Activated CD4-positive, alpha-beta T cell treated with anti-CD3 and anti-CD28 coated beads for 36 hours (primary cell): ENCODE measurements at regions of chr3 and their contacts with region 1.

Region 1: DNA sequence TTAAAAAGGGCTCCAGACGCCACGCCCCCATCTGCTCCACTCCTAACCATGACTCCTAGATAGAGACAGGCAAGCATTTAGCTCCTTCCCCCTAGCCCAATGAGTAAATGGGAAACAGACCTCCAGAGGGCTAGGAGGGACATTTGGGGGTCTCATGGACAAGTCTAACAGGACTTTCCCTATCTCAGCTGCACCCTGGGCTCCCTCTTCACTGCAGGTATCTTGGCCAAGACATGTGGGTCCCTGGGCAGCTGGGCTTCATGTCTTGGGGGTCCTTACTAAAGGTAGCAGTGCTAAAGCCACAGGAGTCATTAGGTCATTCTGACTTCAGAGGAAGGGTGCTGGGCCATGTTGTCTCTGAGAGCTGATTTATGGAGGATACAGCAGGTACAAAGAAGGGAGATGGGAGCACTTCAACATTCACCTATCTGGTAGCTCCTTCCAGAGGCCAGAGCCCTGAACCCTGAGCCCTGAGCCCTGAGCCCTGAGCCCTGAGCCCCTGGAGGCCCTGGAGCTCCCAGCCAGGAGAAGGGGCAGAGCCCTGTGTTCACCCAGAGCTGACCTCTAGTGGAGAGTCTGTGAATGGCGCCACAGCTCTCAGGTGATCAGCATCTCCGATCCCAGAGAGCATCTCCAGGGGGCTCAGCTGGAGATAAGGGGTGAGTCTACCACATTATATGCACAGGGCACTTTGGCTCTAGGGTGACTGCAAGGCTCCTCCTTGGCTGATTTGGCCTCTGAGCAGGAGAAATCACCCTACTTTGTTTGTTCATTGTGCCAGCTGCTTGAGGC is 40.1 kb upstream of the EPHB1 start:
- DNase-seq: peak; percentile 65
- ATAC-seq: no peak
- H3K4me3 Mint-ChIP-seq: no peak overlapping the region
- H3K27ac Mint-ChIP-seq: no peak overlapping the region
- H3K4me1 Mint-ChIP-seq: no peaks in the 10 kb centered on the region
- H3K27me3 Mint-ChIP-seq: peaks cover 13% of the 10 kb centered on the region

Region 2: GRCh38 chr3:134769287-134769868 is 14.4 kb after region 1 on chr3:
- CTCF ChIA-PET with region 1: interaction called, 10 read pairs
- POLR2A ChIA-PET with region 1: no interaction called
- intact Hi-C with region 1: no loop called
- DNase-seq: no peak
- ATAC-seq: no peak
- H3K4me3 Mint-ChIP-seq: no peak overlapping the region
- H3K27ac Mint-ChIP-seq: no peak overlapping the region
- H3K4me1 Mint-ChIP-seq: no peaks in the 10 kb centered on the region
- H3K27me3 Mint-ChIP-seq: peaks cover 2% of the 10 kb centered on the region